ENCODE measurements at regions of chr11 and their contacts with region 1.

Region 1: DNA sequence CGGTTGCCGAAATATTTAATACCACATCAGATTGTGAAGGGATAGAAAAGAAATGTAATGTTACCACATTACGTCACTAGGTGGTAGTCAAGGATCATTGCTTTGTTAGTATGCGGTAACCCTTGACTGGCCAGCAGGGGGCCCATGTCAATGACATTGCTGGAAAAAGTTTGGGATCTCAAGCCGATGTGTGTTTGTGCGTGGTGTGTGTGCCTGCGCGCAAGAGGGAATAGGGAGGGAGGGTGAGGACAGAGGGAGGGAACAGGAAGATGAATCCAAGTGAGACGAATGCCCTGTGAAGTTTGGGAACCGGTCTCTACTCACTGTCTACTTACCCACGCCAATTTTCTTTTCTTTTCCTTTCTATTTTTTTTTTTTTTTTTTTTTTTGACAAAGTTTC is 10.7 kb upstream of the MRGPRX2 start:
- DNase-seq: peak; percentile 90
- H3K4me3 Mint-ChIP-seq: peak overlapping the region; percentile 26
- H3K27ac Mint-ChIP-seq: no peak overlapping the region
- H3K4me1 Mint-ChIP-seq: no peaks in the 10 kb centered on the region
- H3K27me3 Mint-ChIP-seq: peaks cover 54% of the 10 kb centered on the region
- CTCF ChIP-seq: peak; percentile 98

Region 2: DNA sequence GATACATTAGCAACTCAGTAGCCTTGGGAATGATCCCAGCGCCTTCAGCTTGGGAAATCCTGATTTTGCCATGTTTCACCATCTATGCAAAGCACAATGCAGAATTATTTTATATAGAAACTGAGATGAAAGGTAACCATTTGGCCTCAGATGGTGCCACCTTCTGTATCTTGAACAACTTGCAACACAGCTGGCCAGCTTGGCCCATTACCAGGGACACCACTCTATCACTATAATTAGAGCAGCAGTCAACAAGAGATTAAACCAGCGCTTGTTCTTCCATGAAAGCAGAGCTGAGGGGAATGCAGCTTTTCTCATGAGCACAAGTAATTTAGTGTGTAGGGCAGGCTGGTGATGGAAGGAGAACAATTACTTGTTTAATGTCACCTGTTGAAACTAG is 39.0 kb after region 1 on chr11:
- CTCF ChIA-PET with region 1: interaction called, 27 read pairs
- POLR2A ChIA-PET with region 1: no interaction called
- intact Hi-C with region 1: no loop called
- DNase-seq: no peak
- H3K4me3 Mint-ChIP-seq: no peak overlapping the region
- H3K27ac Mint-ChIP-seq: no peak overlapping the region
- H3K4me1 Mint-ChIP-seq: no peaks in the 10 kb centered on the region
- H3K27me3 Mint-ChIP-seq: peaks cover 21% of the 10 kb centered on the region
- CTCF ChIP-seq: no peak

Region 3: GRCh38 chr11:19199771-19200170 is 128.5 kb after region 1 on chr11:
- CTCF ChIA-PET with region 1: interaction called, 12 read pairs
- POLR2A ChIA-PET with region 1: no interaction called
- intact Hi-C with region 1: no loop called
- DNase-seq: no peak
- H3K4me3 Mint-ChIP-seq: no peak overlapping the region
- H3K27ac Mint-ChIP-seq: no peak overlapping the region
- H3K4me1 Mint-ChIP-seq: peaks cover 14% of the 10 kb centered on the region
- H3K27me3 Mint-ChIP-seq: peaks cover 28% of the 10 kb centered on the region
- CTCF ChIP-seq: no peak

Region 4: DNA sequence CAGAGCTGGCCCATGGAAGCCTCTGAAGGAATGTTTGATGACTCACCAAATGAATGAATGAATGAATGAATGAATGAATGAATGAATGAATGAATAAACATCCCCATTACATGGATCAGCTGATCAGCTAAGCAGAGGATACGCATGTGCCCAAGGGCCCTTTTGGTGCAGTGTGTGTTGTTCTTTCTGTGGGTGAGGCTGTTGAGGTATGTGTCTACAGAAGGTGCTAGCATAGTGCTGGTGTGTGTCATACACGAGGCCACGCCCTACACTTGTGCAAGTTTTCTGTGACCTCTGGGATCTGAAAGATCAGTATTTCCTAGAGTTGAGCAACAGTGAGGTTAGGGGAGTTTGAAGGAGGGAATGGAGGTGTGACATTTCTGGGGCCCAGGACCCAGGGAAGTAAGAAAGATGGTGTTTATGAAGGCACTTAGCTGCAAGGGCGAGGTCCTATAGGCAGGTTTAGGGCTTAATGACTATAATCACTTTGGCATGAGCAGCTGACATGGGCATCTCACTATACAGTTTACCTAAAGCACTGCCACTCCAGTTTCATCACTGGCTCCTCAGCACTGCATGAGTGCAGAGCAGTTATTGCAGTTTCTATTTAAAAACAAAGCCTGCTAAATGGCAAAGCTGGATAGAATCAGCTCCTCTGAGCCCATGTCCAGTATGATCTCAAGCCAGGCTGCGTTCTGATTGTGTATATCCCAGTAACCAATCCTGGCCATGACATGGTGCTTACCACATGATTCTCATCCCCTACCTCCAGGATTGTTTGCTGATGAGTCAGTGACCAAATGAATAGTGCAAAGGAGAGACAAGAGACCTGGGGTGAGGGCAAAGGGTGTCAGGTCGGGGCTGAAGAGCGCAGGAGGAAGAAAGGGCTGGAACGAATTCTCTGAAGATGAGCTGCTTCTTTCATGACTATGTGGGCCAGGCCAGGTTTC is 205.9 kb after region 1 on chr11:
- CTCF ChIA-PET with region 1: interaction called, 11 read pairs
- POLR2A ChIA-PET with region 1: no interaction called
- intact Hi-C with region 1: no loop called
- DNase-seq: peak; percentile 95
- H3K4me3 Mint-ChIP-seq: no peak overlapping the region
- H3K27ac Mint-ChIP-seq: peak overlapping the region; percentile 74
- H3K4me1 Mint-ChIP-seq: peaks cover 27% of the 10 kb centered on the region
- H3K27me3 Mint-ChIP-seq: no peaks in the 10 kb centered on the region
- CTCF ChIP-seq: no peak

Region 5: GRCh38 chr11:19553683-19554333 is 482.6 kb after region 1 on chr11:
- CTCF ChIA-PET with region 1: interaction called, 464 read pairs
- POLR2A ChIA-PET with region 1: interaction called, 3 read pairs
- intact Hi-C with region 1: loop called (anchors 1 kb)
- DNase-seq: peak; percentile 85
- H3K4me3 Mint-ChIP-seq: no peak overlapping the region
- H3K27ac Mint-ChIP-seq: no peak overlapping the region
- H3K4me1 Mint-ChIP-seq: no peaks in the 10 kb centered on the region
- H3K27me3 Mint-ChIP-seq: peaks cover 52% of the 10 kb centered on the region
- CTCF ChIP-seq: peak; percentile 88